RWPE1 (cell line): ENCODE measurements at regions of chr15 and their contacts with region 1.

Region 1: DNA sequence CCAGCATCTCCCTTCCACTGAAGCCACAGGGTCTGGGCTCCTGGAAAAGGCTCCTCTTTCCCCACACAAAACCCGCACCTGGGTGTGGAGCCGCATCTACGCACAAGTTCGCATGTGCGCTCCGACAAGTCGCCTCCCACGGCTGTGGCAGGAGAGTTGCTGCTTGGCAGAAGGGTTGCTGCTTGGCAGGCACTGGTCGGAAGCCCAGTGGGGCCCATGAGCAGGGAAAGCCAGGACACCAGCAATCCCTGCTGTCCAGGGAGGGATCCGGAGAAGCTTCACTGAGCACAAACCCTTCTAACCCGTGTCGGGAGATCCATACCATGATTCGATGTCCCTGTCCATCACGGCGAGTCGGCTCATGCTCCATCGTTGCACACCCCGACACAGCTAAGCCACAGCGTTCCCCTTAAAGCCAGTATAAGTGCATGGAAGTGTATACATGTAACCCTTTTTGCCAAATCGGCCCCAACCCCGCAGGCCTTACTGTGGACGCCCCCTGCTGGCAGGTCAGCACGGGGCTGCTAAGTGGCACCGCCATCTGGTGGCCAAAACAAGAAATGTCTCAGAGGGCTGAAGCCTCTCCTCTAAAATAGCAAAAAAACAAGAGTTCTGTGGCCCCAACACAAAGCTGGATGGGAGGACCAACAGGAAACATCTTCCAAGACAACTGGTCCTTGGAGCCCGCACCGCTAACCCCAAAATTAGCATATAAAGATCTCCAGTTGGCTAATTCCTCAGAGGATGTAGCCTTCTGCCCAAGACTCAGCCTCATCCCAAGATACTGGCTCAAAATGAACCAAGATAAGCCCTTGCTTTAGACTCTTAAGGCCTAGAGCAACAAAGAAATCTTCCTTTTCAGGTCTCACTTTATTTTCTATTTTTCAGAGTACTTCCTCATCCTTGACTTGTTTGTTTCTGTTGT is 8.3 kb downstream of the ANKRD63 start:
- DNase-seq: peak; percentile 71
- H3K27ac ChIP-seq: peak overlapping the region; percentile 22
- CTCF ChIP-seq: peak; percentile 100

Region 2: GRCh38 chr15:40232625-40233070 is 42.0 kb before region 1 on chr15:
- CTCF ChIA-PET with region 1: interaction called, 50 read pairs
- POLR2A ChIA-PET with region 1: no interaction called
- DNase-seq: peak; percentile 42
- H3K27ac ChIP-seq: peak overlapping the region; percentile 86
- CTCF ChIP-seq: no peak

Region 3: GRCh38 chr15:40256638-40257235 is 17.9 kb before region 1 on chr15:
- CTCF ChIA-PET with region 1: interaction called, 14 read pairs
- POLR2A ChIA-PET with region 1: no interaction called
- DNase-seq: no peak
- H3K27ac ChIP-seq: 0 out of 2 replicates have a peak overlapping the region, but pooled peaks have one; percentile 1
- CTCF ChIP-seq: no peak

Region 4: DNA sequence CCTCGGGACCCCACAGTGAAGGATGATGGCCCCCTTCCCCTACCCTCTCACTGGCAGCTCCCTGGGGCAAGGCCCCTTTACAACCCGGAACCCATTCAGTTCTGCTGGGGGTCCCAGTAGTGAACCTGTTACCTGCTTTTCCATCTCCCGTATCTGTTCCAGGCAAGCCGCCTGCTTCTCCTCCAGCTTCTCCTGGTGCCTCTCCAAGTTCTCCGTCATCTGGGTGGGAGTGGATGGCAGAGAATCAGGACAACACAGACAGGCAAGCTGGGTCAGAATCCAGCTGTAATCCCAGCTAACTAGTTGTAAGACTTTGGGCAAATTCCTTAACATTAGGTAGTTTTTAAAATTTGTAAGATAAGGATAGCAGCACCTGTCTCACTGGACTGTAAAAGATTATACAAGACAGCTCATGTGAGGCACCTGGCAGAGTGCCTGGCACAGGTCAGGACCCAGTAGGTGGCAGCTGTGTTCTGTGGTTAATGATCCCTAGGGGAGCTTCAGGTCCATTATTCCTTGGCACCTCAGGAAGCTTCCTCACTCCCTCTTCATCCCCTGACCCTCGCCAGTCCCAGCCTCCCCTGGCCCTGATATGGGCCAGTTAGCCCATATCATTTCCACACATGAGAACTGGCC is 14.6 kb after region 1 on chr15:
- CTCF ChIA-PET with region 1: interaction called, 12 read pairs
- POLR2A ChIA-PET with region 1: no interaction called
- DNase-seq: peak; percentile 63
- H3K27ac ChIP-seq: no peak overlapping the region
- CTCF ChIP-seq: no peak

Region 5: DNA sequence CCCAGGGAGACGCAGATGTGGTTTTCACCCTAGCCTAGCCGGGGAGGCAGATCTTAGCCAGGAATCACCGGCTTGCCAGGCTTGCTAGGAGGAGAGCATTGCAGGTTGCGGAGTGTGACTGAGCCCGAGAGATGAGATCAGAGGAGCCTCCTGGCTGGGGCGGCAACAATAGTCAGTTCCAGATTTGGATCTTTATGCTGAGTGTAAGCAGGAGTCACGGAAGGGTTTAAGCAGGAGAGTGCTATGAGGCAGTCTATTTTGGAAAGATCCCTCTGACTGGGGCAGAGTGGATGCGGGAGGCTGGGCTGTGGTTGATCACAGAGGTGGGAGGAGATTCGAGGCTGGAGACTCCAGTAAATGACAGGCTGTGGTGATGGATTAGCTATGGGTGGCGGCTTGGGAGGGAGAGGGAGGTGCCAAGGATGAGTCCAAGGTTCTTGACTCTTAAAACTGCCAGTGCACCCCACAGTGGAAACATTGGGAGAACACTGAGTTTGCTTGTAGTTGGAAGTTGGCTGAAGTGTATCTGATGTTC is 155.7 kb after region 1 on chr15:
- CTCF ChIA-PET with region 1: no interaction called
- POLR2A ChIA-PET with region 1: no interaction called
- DNase-seq: no peak
- H3K27ac ChIP-seq: no peak overlapping the region
- CTCF ChIP-seq: no peak